ENCODE measurements at regions of chr7 and their contacts with region 1.

Region 1: DNA sequence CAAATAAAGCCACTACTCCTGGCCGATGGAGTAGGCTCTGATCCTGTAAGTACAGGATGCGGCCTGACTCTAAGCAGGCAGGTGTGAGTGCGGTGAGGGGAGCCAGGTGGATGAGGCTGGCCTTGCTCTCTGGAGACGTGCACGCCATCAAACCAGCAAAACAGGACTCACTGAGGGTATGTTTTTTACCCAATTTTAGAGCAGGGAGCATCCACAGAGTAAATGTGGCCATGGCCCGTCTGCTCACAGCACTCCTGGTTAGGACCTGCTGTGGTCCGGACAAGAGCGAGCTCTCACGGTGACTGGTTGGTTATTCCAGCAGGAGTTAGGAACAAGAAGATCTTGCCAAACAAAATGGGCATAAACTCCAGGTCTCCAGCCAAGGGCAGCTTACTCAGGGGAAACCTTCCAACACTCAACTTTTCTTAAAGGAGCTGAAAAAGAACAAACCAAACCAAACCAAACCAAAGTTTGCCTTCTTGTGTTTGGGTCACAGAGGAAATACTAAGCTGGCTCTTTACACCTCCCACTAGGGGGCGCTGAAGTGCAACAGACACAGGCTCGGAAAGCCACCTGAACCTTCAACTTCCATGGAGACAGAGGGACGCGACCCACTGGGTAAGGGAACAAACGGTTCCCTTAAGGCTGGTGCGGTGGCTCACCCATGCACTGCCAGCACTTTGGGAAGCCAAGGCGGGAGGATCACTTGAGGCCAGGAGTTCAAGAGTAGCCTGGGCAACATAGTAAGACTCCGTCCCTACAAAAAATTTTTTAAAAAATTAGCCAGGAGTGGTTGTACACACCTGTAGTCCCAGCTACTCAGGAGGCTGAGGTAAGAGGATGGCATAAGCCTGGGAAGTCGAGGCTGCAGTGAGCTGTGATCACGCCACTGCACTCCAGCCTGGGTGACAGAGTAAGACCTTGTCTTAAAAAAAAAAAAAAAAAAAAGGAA is 122.4 kb downstream of the CLEC2L start:
- DNase-seq: peak; percentile 87
- ATAC-seq: peak; percentile 35
- H3K4me3 Mint-ChIP-seq: no peak overlapping the region
- H3K27ac Mint-ChIP-seq: no peak overlapping the region
- H3K4me1 Mint-ChIP-seq: peaks cover 63% of the 10 kb centered on the region
- H3K27me3 Mint-ChIP-seq: no peaks in the 10 kb centered on the region
- CTCF ChIP-seq: peak; percentile 91

Region 2: DNA sequence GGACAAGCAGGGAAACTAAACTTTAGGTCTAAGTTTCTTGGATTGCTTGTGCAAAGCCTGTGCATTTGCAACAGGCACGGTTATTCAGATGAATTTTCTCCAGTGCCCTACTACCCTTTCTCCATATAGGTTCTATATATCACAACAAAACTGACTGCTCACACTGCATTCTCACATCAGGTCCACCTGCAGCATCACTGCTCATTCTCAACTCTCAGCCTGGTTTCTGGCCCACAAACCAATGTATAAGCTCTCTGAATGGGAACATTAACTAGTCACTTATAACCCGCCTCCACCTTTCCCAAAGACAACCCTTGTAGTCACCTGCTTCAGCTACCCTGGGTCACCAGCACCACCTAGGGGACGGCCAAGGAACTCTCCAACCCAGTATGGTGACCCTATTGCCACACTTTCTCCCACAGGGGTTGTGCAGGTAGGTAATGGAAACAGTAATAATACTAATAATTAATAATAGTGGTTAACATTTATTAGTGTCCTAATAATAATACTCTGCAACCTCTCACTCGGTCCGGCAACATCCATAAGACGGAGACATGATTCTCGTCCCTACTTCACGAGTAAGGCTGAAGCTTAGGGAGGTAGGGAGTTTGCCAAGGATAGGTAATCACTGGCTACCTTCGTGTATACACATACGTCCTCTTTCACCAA is 25.0 kb before region 1 on chr7:
- CTCF ChIA-PET with region 1: interaction called, 46 read pairs
- POLR2A ChIA-PET with region 1: no interaction called
- intact Hi-C with region 1: no loop called
- DNase-seq: peak; percentile 72
- ATAC-seq: peak; percentile 90
- H3K4me3 Mint-ChIP-seq: no peak overlapping the region
- H3K27ac Mint-ChIP-seq: no peak overlapping the region
- H3K4me1 Mint-ChIP-seq: peaks cover 17% of the 10 kb centered on the region
- H3K27me3 Mint-ChIP-seq: no peaks in the 10 kb centered on the region
- CTCF ChIP-seq: peak; percentile 77

Region 3: DNA sequence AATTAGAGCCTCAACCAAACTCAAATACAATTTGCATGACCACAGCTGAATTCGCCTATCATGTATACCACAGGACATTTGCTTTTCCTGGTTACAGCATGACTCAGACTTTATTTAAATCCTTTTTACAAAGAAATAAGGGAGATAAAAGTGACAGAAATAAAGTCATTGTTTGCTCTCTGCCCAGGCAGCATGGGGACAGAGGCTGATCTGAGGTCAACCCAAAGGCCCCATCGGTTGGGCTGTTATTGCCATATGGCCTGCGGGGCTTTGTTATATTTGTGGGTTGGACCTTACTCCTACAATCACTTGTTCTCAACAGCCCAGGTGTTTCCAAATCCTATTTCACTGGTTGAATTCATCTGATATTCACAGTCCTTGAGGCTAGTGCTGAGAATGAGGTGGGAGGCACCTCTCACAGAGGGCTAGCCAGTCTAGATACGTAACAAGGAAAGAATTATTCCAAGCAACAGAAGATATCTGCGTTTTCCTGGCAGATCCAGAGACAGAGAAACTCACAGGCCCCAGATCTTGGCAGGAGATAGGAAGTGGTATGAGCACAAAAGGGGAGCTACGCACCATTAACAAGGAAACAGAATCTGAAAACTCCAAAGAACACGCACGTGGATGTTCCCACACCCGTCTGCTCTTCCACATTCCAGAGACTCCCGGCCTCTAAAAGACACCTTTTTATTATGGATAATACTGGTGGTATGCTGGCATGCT is 14.6 kb after region 1 on chr7:
- CTCF ChIA-PET with region 1: interaction called, 48 read pairs
- POLR2A ChIA-PET with region 1: no interaction called
- intact Hi-C with region 1: no loop called
- DNase-seq: no peak
- ATAC-seq: no peak
- H3K4me3 Mint-ChIP-seq: no peak overlapping the region
- H3K27ac Mint-ChIP-seq: no peak overlapping the region
- H3K4me1 Mint-ChIP-seq: peaks cover 26% of the 10 kb centered on the region
- H3K27me3 Mint-ChIP-seq: no peaks in the 10 kb centered on the region
- CTCF ChIP-seq: no peak

Region 4: GRCh38 chr7:139737221-139738100 is 91.6 kb after region 1 on chr7:
- CTCF ChIA-PET with region 1: interaction called, 15 read pairs
- POLR2A ChIA-PET with region 1: interaction called, 3 read pairs
- intact Hi-C with region 1: no loop called
- DNase-seq: peak; percentile 54
- ATAC-seq: peak; percentile 86
- H3K4me3 Mint-ChIP-seq: peak overlapping the region; percentile 34
- H3K27ac Mint-ChIP-seq: peak overlapping the region; percentile 84
- H3K4me1 Mint-ChIP-seq: peaks cover 34% of the 10 kb centered on the region
- H3K27me3 Mint-ChIP-seq: no peaks in the 10 kb centered on the region
- CTCF ChIP-seq: no peak

Region 5: DNA sequence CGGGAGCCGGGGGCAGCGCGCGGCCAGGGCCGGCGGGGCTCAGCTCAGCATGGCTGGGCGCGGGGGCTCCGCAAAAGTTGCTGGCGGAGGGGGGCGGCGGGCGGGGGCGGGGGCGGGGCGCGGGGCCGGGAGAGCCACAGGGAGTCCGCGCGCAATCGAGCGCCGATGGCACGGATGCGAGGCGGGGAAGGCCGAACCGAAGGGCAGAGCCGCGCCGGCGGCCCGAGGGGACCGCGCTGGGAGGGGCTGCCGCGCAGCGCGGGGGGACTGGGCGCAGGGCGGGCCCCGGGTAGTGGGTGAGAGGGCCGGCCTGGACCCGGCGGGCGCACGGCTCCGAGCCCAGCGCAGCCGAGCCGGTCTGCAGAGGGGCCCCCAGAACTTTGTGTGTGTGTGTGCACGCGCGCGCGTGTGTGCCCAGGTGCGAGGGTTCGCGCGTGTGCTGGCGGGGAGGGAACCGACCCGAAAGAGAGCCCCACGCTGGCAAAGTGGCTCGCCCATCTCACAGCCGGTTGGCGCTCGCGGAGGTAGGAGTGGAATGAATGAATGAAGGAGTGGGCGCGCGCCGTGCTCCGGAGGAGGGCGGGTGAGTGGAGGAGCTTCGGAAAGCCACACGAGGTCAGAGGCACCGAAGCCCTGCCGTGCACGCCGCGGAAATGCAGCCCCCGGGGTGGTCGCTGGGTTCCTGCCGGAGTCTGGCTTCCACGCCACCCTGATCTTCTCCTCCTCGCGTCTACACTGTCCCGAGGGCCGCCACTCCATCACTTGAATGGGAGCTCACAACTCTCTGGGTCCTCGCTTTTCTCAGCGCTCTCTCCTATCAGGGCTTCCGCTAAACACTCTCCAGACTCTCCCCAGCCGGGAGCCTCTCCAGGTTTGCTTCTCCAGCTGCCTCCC is 132.3 kb after region 1 on chr7 and contains the start of gene HIPK2:
- CTCF ChIA-PET with region 1: interaction called, 62 read pairs
- POLR2A ChIA-PET with region 1: interaction called, 3 read pairs
- intact Hi-C with region 1: loop called (anchors 5 kb)
- DNase-seq: peak; percentile 71
- ATAC-seq: peak; percentile 55
- H3K4me3 Mint-ChIP-seq: peak within 1 kb of the TSS; percentile 96
- H3K27ac Mint-ChIP-seq: peak within 1 kb of the TSS; percentile 96
- H3K4me1 Mint-ChIP-seq: peaks cover 35% of the 10 kb centered on the region
- H3K27me3 Mint-ChIP-seq: peaks cover 20% of the 10 kb centered on the region
- CTCF ChIP-seq: no peak
- total RNA-seq, gene HIPK2: 17.3 to 17.6 TPM

Region 6: DNA sequence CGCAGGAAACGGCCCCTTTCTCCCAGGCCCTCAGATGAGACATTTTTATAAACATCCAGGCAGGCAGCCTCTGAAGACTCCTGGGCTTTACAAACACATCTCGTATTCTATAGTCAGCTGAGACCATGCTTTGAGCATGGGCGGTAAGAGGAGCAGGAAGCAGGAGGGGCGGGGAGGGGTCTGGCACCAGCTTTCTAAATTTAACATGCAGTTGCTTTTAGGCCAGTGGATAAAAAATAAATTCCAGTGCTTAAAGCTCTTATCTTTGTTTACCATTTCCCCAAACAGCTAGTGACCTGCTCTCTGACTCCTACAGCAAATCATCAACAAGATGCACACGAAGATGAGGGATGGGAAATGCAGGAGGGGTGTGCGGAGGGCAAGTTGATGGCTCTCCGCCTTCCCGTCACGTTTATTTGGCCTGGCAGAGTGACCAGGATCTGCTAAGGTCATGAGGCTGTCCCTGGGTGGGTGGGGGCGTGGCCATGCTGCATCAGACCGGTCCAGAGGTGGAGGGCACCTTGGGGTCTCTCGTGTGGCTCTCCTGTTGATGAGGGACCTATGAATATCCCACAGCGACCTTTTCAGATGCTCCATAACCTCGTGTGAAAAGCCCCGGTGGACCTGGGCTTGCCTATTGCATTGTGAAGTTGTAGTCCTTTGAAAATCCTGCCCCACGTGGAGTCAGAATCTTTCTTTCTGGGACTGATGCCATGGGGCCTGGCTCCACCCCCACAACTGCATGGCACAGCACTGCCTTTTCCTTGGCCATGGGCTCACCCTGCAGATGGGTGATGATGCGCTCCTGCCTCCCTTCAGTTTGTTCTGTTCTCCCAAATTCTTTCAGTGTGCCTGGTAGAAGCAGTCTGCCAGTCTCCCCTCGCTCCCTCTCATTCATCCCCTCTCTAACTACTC is 349.4 kb after region 1 on chr7:
- CTCF ChIA-PET with region 1: interaction called, 13 read pairs
- POLR2A ChIA-PET with region 1: no interaction called
- intact Hi-C with region 1: no loop called
- DNase-seq: no peak
- ATAC-seq: no peak
- H3K4me3 Mint-ChIP-seq: no peak overlapping the region
- H3K27ac Mint-ChIP-seq: no peak overlapping the region
- H3K4me1 Mint-ChIP-seq: no peaks in the 10 kb centered on the region
- H3K27me3 Mint-ChIP-seq: no peaks in the 10 kb centered on the region
- CTCF ChIP-seq: no peak

Measured in activated CD8-positive, alpha-beta T cell treated with anti-CD3 and anti-CD28 coated beads for 36 hours (primary cell).